ENCODE measurements at regions of chr18 and their contacts with region 1.

Region 1: DNA sequence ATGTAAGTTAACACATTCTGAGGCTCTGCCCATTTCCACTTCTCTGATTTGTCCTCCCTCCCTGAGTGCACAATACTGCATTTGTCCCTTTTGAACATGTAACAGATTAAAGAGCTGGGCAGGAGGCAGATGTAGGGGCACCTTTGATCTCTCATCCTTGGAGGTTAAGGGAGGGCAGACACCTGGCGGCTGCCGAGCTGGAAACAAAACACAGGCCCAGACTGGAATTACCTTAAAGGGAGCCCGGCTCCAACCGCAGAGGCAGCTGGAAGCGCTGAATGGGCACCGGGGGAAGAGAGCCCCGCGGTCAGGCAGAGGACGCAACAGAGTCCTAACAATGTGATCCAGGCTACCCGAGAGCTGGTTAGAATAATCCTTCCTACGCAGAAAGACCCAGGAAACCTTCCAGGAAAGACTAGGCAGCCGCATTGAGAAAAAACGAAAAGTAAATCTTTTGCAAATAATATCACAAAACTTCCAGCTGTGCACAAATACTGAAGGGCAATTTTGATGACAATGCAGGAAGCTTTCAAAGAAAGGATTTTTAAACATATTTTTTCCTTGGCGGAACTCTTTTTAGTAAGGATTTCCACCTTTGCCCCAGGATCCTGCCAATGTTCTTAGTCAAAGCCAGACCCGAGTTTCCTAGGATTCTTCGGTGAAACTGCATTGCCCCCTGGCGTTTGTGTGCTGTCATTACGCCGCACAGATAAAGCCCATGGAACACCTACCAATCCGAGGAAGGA is 216.0 kb downstream of the TGIF1 start:
- DNase-seq: peak; percentile 91
- ATAC-seq: peak; percentile 96
- H3K4me3 ChIP-seq: no peak overlapping the region
- H3K27ac ChIP-seq: peak overlapping the region; percentile 72
- H3K4me1 ChIP-seq: peaks cover 7% of the 10 kb centered on the region
- H3K27me3 ChIP-seq: no peaks in the 10 kb centered on the region
- CTCF ChIP-seq: peak; percentile 94
- POLR2A ChIP-seq: no peak
- RAD21 ChIP-seq: peak; percentile 99

Region 2: GRCh38 chr18:3525870-3526420 is 140.0 kb before region 1 on chr18:
- CTCF ChIA-PET with region 1: no interaction called
- POLR2A ChIA-PET with region 1: no interaction called
- dilution Hi-C with region 1: no loop called
- in situ Hi-C with region 1: no loop called
- intact Hi-C with region 1: no loop called
- DNase-seq: no peak
- ATAC-seq: no peak; the same call in 1 of the 2 replicates
- H3K4me3 ChIP-seq: no peak overlapping the region
- H3K27ac ChIP-seq: no peak overlapping the region
- H3K4me1 ChIP-seq: peaks cover 2% of the 10 kb centered on the region; the same call in 1 of the 2 replicates
- H3K27me3 ChIP-seq: peaks cover 4% of the 10 kb centered on the region; the same call in 1 of the 2 replicates
- CTCF ChIP-seq: no peak
- POLR2A ChIP-seq: no peak
- RAD21 ChIP-seq: no peak

Region 3: DNA sequence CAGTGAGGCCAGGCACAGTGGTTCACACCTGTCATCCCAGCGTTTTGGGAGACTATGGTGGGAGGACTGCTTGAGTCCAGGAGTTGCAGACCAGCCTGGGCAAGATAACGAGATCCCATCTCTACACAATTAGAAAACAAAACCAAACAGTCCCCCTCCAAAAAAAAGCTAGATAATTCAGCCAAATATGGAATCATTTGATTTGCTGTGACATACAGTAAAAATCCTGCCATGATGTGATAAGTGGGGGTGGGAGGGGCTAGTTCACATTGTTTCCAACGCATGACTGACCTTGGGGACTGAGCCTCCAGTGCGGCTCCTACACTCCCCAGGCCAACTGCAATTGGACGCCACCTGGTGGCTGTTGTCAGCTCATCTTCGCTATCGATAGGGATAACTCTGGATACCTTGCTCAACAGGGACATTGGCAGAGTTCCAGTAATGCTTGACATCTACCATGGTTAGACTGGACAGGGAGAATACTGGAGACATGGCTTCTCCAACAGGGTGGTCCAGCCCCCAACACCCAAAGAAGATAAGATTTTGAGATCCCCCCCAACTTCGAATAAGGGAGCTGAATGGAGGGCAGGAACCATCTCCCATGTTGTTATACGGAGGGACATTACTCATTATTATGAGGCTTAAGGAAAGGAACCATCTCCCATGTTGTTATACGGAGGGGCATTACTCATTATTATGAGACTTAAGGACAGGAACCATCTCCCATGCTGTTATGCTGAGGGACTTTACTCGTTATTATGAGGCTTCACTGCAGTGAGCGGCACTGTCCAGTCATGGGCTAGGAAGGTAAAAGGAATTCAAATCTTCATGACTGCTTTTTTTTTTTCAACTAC is 80.1 kb before region 1 on chr18:
- CTCF ChIA-PET with region 1: interaction called, 10 read pairs
- POLR2A ChIA-PET with region 1: no interaction called
- dilution Hi-C with region 1: no loop called
- in situ Hi-C with region 1: loop called (anchors 10 kb)
- intact Hi-C with region 1: no loop called
- DNase-seq: peak; percentile 78
- ATAC-seq: peak; percentile 91
- H3K4me3 ChIP-seq: no peak overlapping the region
- H3K27ac ChIP-seq: no peak overlapping the region
- H3K4me1 ChIP-seq: peaks cover 5% of the 10 kb centered on the region
- H3K27me3 ChIP-seq: no peaks in the 10 kb centered on the region
- CTCF ChIP-seq: peak; percentile 68
- POLR2A ChIP-seq: no peak
- RAD21 ChIP-seq: peak; percentile 71

Region 4: GRCh38 chr18:4196345-4196744 is 530.4 kb after region 1 on chr18:
- CTCF ChIA-PET with region 1: no interaction called
- POLR2A ChIA-PET with region 1: no interaction called
- dilution Hi-C with region 1: no loop called
- in situ Hi-C with region 1: no loop called
- intact Hi-C with region 1: no loop called
- DNase-seq: no peak
- ATAC-seq: no peak
- H3K4me3 ChIP-seq: no peak overlapping the region
- H3K27ac ChIP-seq: no peak overlapping the region
- H3K4me1 ChIP-seq: no peaks in the 10 kb centered on the region
- H3K27me3 ChIP-seq: no peaks in the 10 kb centered on the region
- CTCF ChIP-seq: no peak
- POLR2A ChIP-seq: no peak
- RAD21 ChIP-seq: no peak

Measured in IMR-90 (cell line).